Mucosa of descending colon (tissue), 3 donors: ENCODE measurements at regions of chr6 and their contacts with region 1.

Region 1: DNA sequence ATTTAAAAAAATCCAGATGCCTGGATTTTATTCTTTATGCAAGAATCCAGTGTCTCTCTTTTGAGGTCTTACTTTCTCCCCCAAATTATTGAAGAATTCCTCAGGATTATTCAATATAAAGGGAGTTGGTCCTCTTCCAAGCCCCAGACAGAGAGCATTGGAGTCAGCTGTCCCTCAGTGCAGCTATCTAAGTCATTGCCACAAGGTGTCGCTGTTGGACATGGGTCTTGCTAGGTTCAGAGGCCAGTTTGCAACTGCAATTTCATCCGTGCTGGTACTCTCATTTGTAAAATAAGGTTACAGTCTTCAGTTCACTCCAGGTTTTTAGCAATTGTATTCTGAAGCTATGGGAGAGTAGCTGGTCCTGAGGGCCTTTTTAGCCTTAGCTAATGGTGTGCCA is 27.8 kb downstream of the CCN2 start:
- DNase-seq: peak in 2 of 3 donors; percentile 45 to 83
- ATAC-seq: peak; percentile 86
- H3K4me3 ChIP-seq: no peak overlapping the region
- H3K4me1 ChIP-seq: no peaks in the 10 kb centered on the region
- CTCF ChIP-seq: peak; percentile 14

Region 2: GRCh38 chr6:131861381-131861780 is 62.0 kb before region 1 on chr6:
- intact Hi-C with region 1: no loop called
- DNase-seq: no peak
- ATAC-seq: no peak
- H3K4me3 ChIP-seq: no peak overlapping the region
- H3K4me1 ChIP-seq: peaks cover 15% of the 10 kb centered on the region
- CTCF ChIP-seq: no peak

Region 3: GRCh38 chr6:132161283-132161682 is 237.9 kb after region 1 on chr6:
- intact Hi-C with region 1: loop called in 1 of 2 experiments (anchors 2 kb)
- DNase-seq: peak in 1 of 3 donors; percentile 9
- ATAC-seq: peak; percentile 42
- H3K4me3 ChIP-seq: no peak overlapping the region
- H3K4me1 ChIP-seq: no peaks in the 10 kb centered on the region
- CTCF ChIP-seq: peak; percentile 30

Region 4: GRCh38 chr6:132218059-132218696 is 294.8 kb after region 1 on chr6:
- intact Hi-C with region 1: loop called (anchors 5 to 10 kb)
- DNase-seq: no peak
- ATAC-seq: no peak
- H3K4me3 ChIP-seq: no peak overlapping the region
- H3K4me1 ChIP-seq: no peaks in the 10 kb centered on the region
- CTCF ChIP-seq: no peak